Psoas muscle (tissue), 8 donors: ENCODE measurements at regions of chr1 and their contacts with region 1.

Region 1: GRCh38 chr1:27192039-27192529 is 37.2 kb upstream of the SLC9A1 start:
- DNase-seq: no peak
- ATAC-seq: no peak
- H3K4me3 ChIP-seq: no peak overlapping the region
- H3K27ac ChIP-seq: no peak overlapping the region
- H3K4me1 ChIP-seq: no peaks in the 10 kb centered on the region
- H3K27me3 ChIP-seq: no peaks in the 10 kb centered on the region
- CTCF ChIP-seq: no peak

Region 2: DNA sequence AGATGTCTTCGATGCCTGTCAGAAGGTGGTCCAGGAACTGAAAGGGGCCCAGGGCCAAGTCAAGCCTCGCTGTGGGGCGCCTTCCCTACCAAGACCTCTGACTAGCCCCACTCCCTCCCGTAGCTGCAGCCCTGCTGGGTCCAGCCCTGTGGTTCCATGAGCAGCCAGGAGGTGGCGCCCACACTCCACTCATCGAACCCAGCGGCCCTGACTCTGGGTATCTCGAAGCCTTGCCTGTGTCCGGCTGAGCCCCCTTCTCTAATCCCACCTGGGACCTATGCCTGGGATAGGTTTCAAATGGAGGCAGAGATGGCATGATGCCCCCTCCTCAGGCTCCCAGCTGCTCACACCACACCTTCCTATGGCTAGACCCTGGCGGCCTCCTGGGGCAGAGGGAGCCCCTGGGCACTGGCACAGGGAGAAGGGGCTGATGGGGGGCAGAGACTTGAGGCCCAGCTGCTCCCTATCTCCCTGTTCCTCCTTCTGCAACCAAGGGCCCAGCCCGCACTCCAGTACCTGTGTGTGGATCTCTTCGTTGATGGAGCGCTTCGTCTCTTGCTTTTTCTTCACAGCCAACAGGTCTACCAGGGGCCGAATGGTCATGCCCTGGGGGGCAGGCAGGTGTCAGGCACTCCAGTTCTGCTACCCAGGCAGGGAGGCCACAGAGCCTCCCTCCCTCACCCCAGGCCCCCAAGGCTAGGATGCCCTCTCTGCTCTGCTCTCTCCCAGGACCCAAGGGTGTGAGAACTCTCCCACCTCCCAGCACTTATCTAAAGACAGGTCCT is 89.2 kb before region 1 on chr1:
- intact Hi-C with region 1: loop called in 1 of 2 experiments (anchors 10 kb)
- DNase-seq: peak; percentile 75 to 86
- ATAC-seq: peak; percentile 78 to 90 (median 86)
- H3K4me3 ChIP-seq: no peak overlapping the region
- H3K27ac ChIP-seq: no peak overlapping the region
- H3K4me1 ChIP-seq: no peaks in the 10 kb centered on the region
- H3K27me3 ChIP-seq: no peaks in the 10 kb centered on the region
- CTCF ChIP-seq: peak; percentile 98

Region 3: GRCh38 chr1:27234049-27234882 is 42.2 kb after region 1 on chr1 and contains the start of gene WDTC1:
- intact Hi-C with region 1: no loop called
- DNase-seq: peak; percentile 99
- ATAC-seq: peak; percentile 98 to 99 (median 99)
- H3K4me3 ChIP-seq: peak within 1 kb of the TSS; percentile 98
- H3K27ac ChIP-seq: peak within 1 kb of the TSS; percentile 91
- H3K4me1 ChIP-seq: peaks cover 27% of the 10 kb centered on the region
- H3K27me3 ChIP-seq: no peaks in the 10 kb centered on the region
- CTCF ChIP-seq: no peak
- total RNA-seq, gene WDTC1: 55.6 to 66.1 (median 61.2) TPM